Activated naive CD4-positive, alpha-beta T cell treated with anti-CD3 and anti-CD28 coated beads for 36 hours (primary cell): ENCODE measurements at regions of chr1 and their contacts with region 1.

Region 1: GRCh38 chr1:153849487-153850185 is 73.1 kb downstream of the GATAD2B start:
- DNase-seq: peak; percentile 53
- H3K4me3 Mint-ChIP-seq: no peak overlapping the region
- H3K27ac Mint-ChIP-seq: peak overlapping the region; percentile 78
- H3K4me1 Mint-ChIP-seq: peaks cover 33% of the 10 kb centered on the region
- H3K27me3 Mint-ChIP-seq: no peaks in the 10 kb centered on the region

Region 2: DNA sequence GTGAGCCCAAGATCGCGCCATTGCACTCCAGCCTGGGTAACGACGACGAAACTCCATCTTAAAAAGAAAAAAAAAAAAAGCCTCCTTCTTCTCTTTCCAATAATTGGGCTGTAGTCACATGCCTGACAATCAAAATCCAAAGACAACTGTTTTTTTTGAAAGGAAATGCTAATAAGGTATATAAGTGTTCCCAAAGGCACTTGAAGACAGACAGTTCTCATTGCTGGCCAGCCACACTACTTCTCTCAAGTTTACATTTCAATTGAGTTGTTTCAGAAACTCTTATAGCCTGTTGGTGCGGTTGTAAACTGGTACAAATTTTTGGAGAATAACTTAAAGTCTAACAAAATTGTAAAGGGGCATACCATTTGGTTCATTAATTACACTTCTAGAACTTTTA is 49.9 kb after region 1 on chr1:
- CTCF ChIA-PET with region 1: no interaction called
- intact Hi-C with region 1: loop called (anchors 5 kb)
- DNase-seq: no peak
- H3K4me3 Mint-ChIP-seq: no peak overlapping the region
- H3K27ac Mint-ChIP-seq: no peak overlapping the region
- H3K4me1 Mint-ChIP-seq: peaks cover 13% of the 10 kb centered on the region
- H3K27me3 Mint-ChIP-seq: no peaks in the 10 kb centered on the region

Region 3: DNA sequence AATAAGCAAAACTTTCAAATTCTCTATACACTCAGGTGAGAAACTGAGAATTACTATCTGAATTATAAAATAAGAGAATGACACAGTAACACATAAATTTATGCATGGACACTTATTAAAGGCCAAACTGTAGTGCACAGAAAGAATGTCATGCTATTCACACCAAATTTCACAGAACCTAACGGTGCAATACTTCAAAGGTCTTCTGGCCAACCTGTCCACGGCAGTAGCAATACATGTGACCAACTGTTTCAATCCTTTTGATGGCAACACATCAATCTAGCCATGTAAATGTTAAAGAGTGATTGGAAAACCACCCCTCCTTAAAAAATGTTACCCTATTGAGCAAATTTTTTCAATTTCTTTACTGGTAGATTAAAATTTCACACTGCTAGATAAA is 62.7 kb after region 1 on chr1:
- CTCF ChIA-PET with region 1: no interaction called
- intact Hi-C with region 1: no loop called
- DNase-seq: no peak
- H3K4me3 Mint-ChIP-seq: no peak overlapping the region
- H3K27ac Mint-ChIP-seq: no peak overlapping the region
- H3K4me1 Mint-ChIP-seq: peaks cover 37% of the 10 kb centered on the region
- H3K27me3 Mint-ChIP-seq: no peaks in the 10 kb centered on the region

Region 4: GRCh38 chr1:153991806-153992205 is 142.2 kb after region 1 on chr1:
- CTCF ChIA-PET with region 1: no interaction called
- intact Hi-C with region 1: no loop called
- DNase-seq: no peak
- H3K4me3 Mint-ChIP-seq: peak overlapping the region; percentile 93
- H3K27ac Mint-ChIP-seq: peak overlapping the region; percentile 97
- H3K4me1 Mint-ChIP-seq: peaks cover 37% of the 10 kb centered on the region
- H3K27me3 Mint-ChIP-seq: no peaks in the 10 kb centered on the region